ENCODE measurements at regions of chr6 and their contacts with region 1.

Region 1: GRCh38 chr6:34986845-34987246 is 97.8 kb downstream of the ANKS1A start:
- DNase-seq: peak; percentile 44 to 76 (median 62)
- H3K4me3 ChIP-seq: no peak overlapping the region
- H3K27ac ChIP-seq: peak overlapping the region in 57 of 59 donors; percentile 21 to 88 (median 69)
- H3K27me3 ChIP-seq: no peaks in the 10 kb centered on the region
- CTCF ChIP-seq: peak; percentile 83 to 99 (median 92)

Region 2: GRCh38 chr6:34757687-34758274 is 229.1 kb before region 1 on chr6:
- intact Hi-C with region 1: no loop called
- DNase-seq: no peak
- H3K4me3 ChIP-seq: peak overlapping the region; percentile 62 to 99 (median 84)
- H3K27ac ChIP-seq: peak overlapping the region in 57 of 59 donors; percentile 21 to 98 (median 94)
- H3K27me3 ChIP-seq: no peaks in the 10 kb centered on the region
- CTCF ChIP-seq: no peak

Region 3: GRCh38 chr6:34791701-34792235 is 195.1 kb before region 1 on chr6 and contains the start of gene BLTP3A:
- intact Hi-C with region 1: loop called in 1 of 2 experiments (anchors 10 kb)
- DNase-seq: peak; percentile 33 to 81 (median 54)
- H3K4me3 ChIP-seq: peak within 1 kb of the TSS; percentile 62 to 98 (median 91)
- H3K27ac ChIP-seq: peak within 1 kb of the TSS in 58 of 59 donors; percentile 66 to 97 (median 93)
- H3K27me3 ChIP-seq: no peaks in the 10 kb centered on the region
- CTCF ChIP-seq: peak in 24 of 56 donors; percentile 2 to 52 (median 26)
- total RNA-seq, gene BLTP3A: 9.5 to 19.4 (median 14.4) TPM

Region 4: DNA sequence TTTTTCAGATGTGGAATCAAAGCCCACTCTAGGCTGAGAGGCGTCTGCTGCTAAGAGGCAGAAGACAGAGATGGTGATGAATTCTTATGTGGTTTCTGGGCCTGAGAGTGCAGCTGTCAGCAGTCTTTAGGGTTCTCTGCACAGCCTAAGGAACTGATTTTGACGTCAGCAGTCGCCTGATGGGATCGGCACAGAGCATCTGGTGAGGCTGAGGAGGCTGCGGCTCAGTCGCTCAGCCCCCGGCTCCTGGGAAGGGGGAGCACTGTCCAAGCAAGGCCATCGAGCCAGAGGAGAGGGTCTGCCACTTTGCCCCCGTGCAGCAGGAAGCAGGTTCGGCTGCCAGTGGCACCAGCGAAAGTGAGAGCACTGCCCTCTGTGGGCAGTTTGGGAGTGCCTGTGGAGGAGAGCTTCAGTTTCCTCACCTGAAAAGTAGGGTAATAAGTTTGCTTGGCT is 61.8 kb after region 1 on chr6:
- intact Hi-C with region 1: loop called (anchors 1 to 10 kb)
- DNase-seq: peak in 8 of 10 donors; percentile 47 to 74 (median 67)
- H3K4me3 ChIP-seq: peak overlapping the region in 55 of 59 donors; percentile 0 to 63 (median 35)
- H3K27ac ChIP-seq: peak overlapping the region; percentile 80 to 99 (median 97)
- H3K27me3 ChIP-seq: no peaks in the 10 kb centered on the region
- CTCF ChIP-seq: peak in 54 of 56 donors; percentile 15 to 70 (median 56)

Region 5: GRCh38 chr6:35139908-35140655 is 153.2 kb after region 1 on chr6:
- intact Hi-C with region 1: loop called (anchors 1 to 2 kb)
- DNase-seq: peak in 6 of 10 donors; percentile 32 to 55 (median 44)
- H3K4me3 ChIP-seq: peak overlapping the region in 1 of 59 donors; percentile 15
- H3K27ac ChIP-seq: no peak overlapping the region
- H3K27me3 ChIP-seq: peaks cover 0 to 11% (median 0%) of the 10 kb centered on the region in 45 donors
- CTCF ChIP-seq: peak; percentile 77 to 98 (median 88)

Region 6: DNA sequence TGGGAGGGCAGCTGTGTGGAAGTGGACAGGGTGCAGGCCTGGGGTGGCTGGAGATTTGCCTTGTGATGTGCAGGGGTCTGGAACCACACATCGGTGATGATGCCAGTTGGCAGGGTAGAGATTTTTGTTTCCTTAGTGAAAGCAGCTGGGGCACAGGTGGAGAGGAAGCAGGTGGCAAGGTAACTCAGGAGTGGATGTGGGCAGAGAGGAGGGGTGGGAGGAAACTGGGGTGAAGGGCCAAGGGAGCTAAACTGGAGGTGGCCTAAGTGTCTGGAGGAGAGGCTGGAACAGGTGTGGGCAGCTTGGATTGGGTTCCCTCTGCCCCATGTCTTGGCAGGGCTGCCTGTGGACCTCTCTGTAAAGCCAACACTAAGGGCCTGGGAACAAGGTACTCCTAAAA is 222.2 kb after region 1 on chr6:
- intact Hi-C with region 1: loop called in 1 of 2 experiments (anchors 5 kb)
- DNase-seq: no peak
- H3K4me3 ChIP-seq: no peak overlapping the region
- H3K27ac ChIP-seq: no peak overlapping the region
- H3K27me3 ChIP-seq: peaks cover 0 to 14% (median 0%) of the 10 kb centered on the region in 45 donors
- CTCF ChIP-seq: no peak

Region 7: GRCh38 chr6:35240840-35241801 is 254.3 kb after region 1 on chr6:
- intact Hi-C with region 1: loop called (anchors 5 kb)
- DNase-seq: peak; percentile 58 to 85 (median 76)
- H3K4me3 ChIP-seq: no peak overlapping the region
- H3K27ac ChIP-seq: peak overlapping the region in 1 of 59 donors; percentile 4
- H3K27me3 ChIP-seq: no peaks in the 10 kb centered on the region
- CTCF ChIP-seq: peak; percentile 84 to 99 (median 95)